Mucosa of descending colon (tissue), 3 donors: ENCODE measurements at regions of chr9 and their contacts with region 1.

Region 1: GRCh38 chr9:36317764-36318163 is 59.5 kb upstream of the GNE start:
- DNase-seq: peak; percentile 92 to 95 (median 94)
- ATAC-seq: peak; percentile 87
- H3K4me3 ChIP-seq: no peak overlapping the region
- H3K4me1 ChIP-seq: peaks cover 28% of the 10 kb centered on the region
- CTCF ChIP-seq: no peak

Region 2: DNA sequence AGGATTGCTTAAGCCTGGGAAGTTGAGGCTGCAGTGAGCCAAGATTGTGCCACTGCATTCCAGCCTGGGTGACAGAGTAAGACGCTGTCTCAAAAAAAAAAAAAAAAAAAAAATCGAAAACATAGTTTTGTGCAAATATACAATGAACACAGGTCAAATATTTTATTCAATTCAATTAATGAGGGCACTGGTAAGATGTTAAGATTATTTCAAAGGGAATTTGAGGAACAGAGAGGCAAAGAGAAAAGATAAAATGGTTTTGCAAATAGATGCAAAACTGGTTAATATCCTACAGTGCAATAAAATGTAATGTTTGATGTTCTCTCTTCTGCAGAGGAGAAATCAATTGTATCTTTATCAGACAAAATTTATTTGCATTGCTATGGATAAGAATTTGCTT is 20.0 kb before region 1 on chr9:
- intact Hi-C with region 1: loop called in 1 of 2 experiments (anchors 2 kb)
- DNase-seq: no peak
- ATAC-seq: no peak
- H3K4me3 ChIP-seq: no peak overlapping the region
- H3K4me1 ChIP-seq: peaks cover 4% of the 10 kb centered on the region
- CTCF ChIP-seq: no peak

Region 3: DNA sequence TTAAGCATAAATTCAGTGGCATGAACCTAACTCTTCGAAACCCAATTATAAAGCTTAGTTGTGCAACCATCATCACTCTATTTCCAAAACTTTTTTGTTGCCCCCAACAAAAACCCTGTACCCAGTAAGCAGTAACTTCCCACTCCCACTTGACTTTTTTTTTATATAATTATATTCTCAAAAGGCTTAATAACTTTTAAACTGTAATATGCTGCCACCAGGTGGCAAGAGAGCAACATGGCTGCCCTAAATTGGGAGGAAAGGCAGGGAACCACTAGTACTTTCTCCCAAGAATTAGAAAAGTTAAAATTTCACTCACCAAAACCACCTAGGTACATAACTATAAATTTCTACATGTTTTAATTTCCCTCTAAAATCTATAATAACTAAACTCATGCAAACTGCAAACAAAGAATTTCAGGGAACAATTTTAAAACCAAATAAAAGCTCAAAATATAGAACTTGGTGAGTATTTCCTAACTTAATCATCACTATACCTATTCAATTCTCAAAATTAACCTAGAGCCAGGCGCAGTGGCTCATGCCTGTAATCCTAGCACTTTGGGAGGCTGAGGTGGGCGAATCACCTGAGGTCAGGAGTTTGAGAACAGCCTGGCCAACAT is 132.5 kb after region 1 on chr9:
- intact Hi-C with region 1: no loop called
- DNase-seq: peak in 1 of 3 donors; percentile 53
- ATAC-seq: no peak
- H3K4me3 ChIP-seq: no peak overlapping the region
- H3K4me1 ChIP-seq: no peaks in the 10 kb centered on the region
- CTCF ChIP-seq: peak; percentile 36